Breast epithelium (tissue), 4 donors: ENCODE measurements at regions of chr12 and their contacts with region 1.

Region 1: GRCh38 chr12:75334384-75335030 is at the start of gene GLIPR1L1:
- DNase-seq: peak; percentile 80 to 81
- H3K4me3 ChIP-seq: peak within 1 kb of the TSS; percentile 36 to 65 (median 43)
- H3K27ac ChIP-seq: no peak within 1 kb of the TSS
- H3K4me1 ChIP-seq: peaks cover 0 to 3% of the 10 kb centered on the region in 2 donors
- H3K27me3 ChIP-seq: no peaks in the 10 kb centered on the region
- CTCF ChIP-seq: peak; percentile 73 to 90 (median 84)
- POLR2A ChIP-seq: no peak
- total RNA-seq, gene GLIPR1L1: not detected

Region 2: GRCh38 chr12:74602881-74603523 is 731.5 kb before region 1 on chr12:
- intact Hi-C with region 1: no loop called
- DNase-seq: no peak
- H3K4me3 ChIP-seq: no peak overlapping the region
- H3K27ac ChIP-seq: no peak overlapping the region
- H3K4me1 ChIP-seq: no peaks in the 10 kb centered on the region
- H3K27me3 ChIP-seq: no peaks in the 10 kb centered on the region
- CTCF ChIP-seq: no peak
- POLR2A ChIP-seq: no peak

Region 3: GRCh38 chr12:75315518-75315917 is 19.0 kb before region 1 on chr12:
- intact Hi-C with region 1: loop called (anchors 2 kb)
- DNase-seq: no peak
- H3K4me3 ChIP-seq: no peak overlapping the region
- H3K27ac ChIP-seq: no peak overlapping the region
- H3K4me1 ChIP-seq: no peaks in the 10 kb centered on the region
- H3K27me3 ChIP-seq: no peaks in the 10 kb centered on the region
- CTCF ChIP-seq: no peak
- POLR2A ChIP-seq: no peak

Region 4: GRCh38 chr12:75390899-75391538 is 56.5 kb after region 1 on chr12 and contains the start of gene GLIPR1L2:
- intact Hi-C with region 1: loop called (anchors 5 kb)
- DNase-seq: peak; percentile 91 to 94
- H3K4me3 ChIP-seq: peak within 1 kb of the TSS; percentile 51 to 84 (median 70)
- H3K27ac ChIP-seq: peak within 1 kb of the TSS; percentile 96
- H3K4me1 ChIP-seq: peaks cover 0 to 5% of the 10 kb centered on the region in 2 donors
- H3K27me3 ChIP-seq: no peaks in the 10 kb centered on the region
- CTCF ChIP-seq: peak; percentile 62 to 93 (median 82)
- POLR2A ChIP-seq: peak; percentile 69
- total RNA-seq, gene GLIPR1L2: 0.80 to 6.3 (median 2.3) TPM